Activated CD4-positive, alpha-beta memory T cell treated with anti-CD3 and anti-CD28 coated beads for 36 hours (primary cell): ENCODE measurements at regions of chr13 and their contacts with region 1.

Region 1: GRCh38 chr13:40026174-40026585 is 370.7 kb downstream of the COG6 start:
- DNase-seq: peak; percentile 82
- H3K4me3 Mint-ChIP-seq: peak overlapping the region; percentile 3
- H3K27ac Mint-ChIP-seq: peak overlapping the region; percentile 83
- H3K4me1 Mint-ChIP-seq: peaks cover 44% of the 10 kb centered on the region
- H3K27me3 Mint-ChIP-seq: peaks cover 5% of the 10 kb centered on the region

Region 2: DNA sequence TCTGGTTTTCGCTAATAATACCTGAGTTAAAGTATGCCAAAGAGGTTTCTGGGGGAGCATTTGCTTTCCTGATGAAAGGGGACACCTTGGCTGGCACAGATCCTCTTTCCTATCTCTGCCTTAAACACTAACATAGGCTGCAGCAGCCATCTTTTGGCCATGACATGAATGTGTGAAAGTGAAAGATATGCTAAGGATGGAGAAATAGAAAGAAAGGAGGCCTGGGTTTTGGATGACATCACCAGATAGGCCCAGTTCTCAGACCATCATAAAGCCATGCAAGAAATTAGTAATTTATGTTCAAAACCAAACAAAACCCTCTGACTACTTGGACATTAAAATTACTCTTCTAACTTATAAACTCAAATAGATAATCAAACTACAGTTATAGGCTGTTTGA is 91.0 kb before region 1 on chr13:
- CTCF ChIA-PET with region 1: interaction called, 4 read pairs
- POLR2A ChIA-PET with region 1: no interaction called
- intact Hi-C with region 1: loop called (anchors 2 kb)
- DNase-seq: no peak
- H3K4me3 Mint-ChIP-seq: no peak overlapping the region
- H3K27ac Mint-ChIP-seq: no peak overlapping the region
- H3K4me1 Mint-ChIP-seq: peaks cover 17% of the 10 kb centered on the region
- H3K27me3 Mint-ChIP-seq: no peaks in the 10 kb centered on the region

Region 3: DNA sequence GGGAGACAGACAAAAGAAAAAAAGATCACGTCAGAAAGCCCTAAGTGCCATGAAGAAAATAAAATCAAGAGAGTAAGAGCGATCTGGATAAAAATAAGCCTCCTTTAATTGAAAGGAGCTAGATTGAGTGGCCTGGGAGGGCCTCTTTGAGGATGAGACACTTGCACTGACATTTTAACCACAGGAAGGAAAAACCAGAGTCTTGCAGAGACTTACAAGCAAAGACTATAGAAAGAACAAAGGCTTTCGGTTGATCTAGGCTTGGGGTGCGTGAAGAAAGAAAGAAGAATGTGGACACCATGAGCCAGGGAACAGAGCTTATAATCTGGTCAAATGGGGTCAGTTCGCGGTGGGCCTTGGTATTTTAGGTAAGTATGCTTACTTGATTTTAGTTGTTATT is 28.0 kb before region 1 on chr13:
- CTCF ChIA-PET with region 1: no interaction called
- POLR2A ChIA-PET with region 1: no interaction called
- intact Hi-C with region 1: no loop called
- DNase-seq: peak; percentile 25
- H3K4me3 Mint-ChIP-seq: no peak overlapping the region
- H3K27ac Mint-ChIP-seq: no peak overlapping the region
- H3K4me1 Mint-ChIP-seq: peaks cover 19% of the 10 kb centered on the region
- H3K27me3 Mint-ChIP-seq: no peaks in the 10 kb centered on the region

Region 4: DNA sequence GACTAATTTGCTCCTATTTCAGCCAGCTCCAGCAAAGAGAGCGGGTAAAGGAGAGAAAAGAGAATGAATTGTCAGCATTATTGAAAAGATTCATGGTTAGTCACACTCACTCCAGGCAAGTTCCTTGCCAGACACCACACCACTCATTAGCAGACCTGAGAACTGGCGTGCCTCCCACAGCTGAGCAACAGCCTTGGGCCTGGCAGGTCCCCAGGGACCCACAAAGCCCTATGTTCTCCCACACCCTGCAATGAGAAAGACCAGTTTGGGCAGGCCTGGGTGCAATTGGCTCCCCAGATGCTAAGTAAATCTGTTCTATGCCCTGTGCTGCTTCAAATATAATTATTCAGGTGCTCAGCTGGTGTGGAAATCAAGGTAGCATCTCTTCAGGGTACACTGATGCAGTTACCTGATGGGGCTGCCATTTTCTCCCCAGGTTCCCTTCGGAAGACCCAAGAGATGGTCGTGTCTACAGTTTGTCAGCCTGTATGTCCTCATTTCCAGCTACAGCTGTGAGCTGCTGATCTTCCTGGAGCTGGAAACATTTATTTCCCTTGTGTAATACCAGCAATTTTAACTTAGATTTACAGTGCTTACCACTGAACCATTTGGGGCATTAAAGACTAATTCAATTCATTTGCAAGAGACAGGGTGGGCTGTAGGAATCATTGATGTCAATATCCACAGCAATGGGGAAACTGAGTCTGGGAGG is 34.3 kb after region 1 on chr13:
- CTCF ChIA-PET with region 1: interaction called, 4 read pairs
- POLR2A ChIA-PET with region 1: interaction called, 5 read pairs
- intact Hi-C with region 1: loop called (anchors 1 kb)
- DNase-seq: peak; percentile 83
- H3K4me3 Mint-ChIP-seq: peak overlapping the region; percentile 42
- H3K27ac Mint-ChIP-seq: peak overlapping the region; percentile 47
- H3K4me1 Mint-ChIP-seq: peaks cover 46% of the 10 kb centered on the region
- H3K27me3 Mint-ChIP-seq: no peaks in the 10 kb centered on the region

Region 5: DNA sequence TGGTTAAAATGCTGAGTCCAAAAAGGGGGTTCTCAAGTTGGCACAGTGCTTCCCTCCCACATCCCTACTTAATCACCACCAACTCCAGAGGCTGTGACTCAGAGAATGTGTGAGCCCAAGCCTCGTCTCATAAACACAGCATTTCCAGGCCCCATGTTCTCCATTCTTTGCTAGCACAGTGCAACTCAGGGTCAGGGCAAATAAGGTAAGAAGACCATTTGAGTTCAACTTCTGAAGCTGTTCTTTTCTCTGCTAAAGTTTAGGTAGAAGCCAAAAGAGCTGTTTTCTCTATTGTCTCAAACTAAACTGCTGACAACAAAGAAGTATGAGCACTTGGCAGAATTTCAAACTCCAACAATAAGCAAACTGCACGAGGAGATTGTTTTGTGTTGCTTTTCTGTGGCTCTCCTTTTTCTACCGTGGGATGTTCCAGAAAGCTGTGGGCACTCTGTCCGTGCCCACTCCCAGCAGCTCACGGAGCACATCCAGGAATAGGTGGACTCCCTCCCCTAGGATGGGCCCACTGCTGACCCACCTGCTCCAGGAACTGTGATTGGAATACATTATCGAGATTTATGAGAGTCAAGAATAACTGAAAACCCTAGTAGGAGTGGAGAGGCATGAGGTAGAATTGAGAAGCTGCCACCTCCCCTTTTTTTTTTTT is 123.6 kb after region 1 on chr13:
- CTCF ChIA-PET with region 1: no interaction called
- POLR2A ChIA-PET with region 1: no interaction called
- intact Hi-C with region 1: loop called (anchors 2 kb)
- DNase-seq: no peak
- H3K4me3 Mint-ChIP-seq: no peak overlapping the region
- H3K27ac Mint-ChIP-seq: peak overlapping the region; percentile 18
- H3K4me1 Mint-ChIP-seq: peaks cover 62% of the 10 kb centered on the region
- H3K27me3 Mint-ChIP-seq: no peaks in the 10 kb centered on the region

Region 6: GRCh38 chr13:40251343-40252032 is 225.3 kb after region 1 on chr13:
- CTCF ChIA-PET with region 1: no interaction called
- POLR2A ChIA-PET with region 1: no interaction called
- intact Hi-C with region 1: loop called (anchors 1 kb)
- DNase-seq: peak; percentile 13
- H3K4me3 Mint-ChIP-seq: no peak overlapping the region
- H3K27ac Mint-ChIP-seq: peak overlapping the region; percentile 70
- H3K4me1 Mint-ChIP-seq: peaks cover 42% of the 10 kb centered on the region
- H3K27me3 Mint-ChIP-seq: no peaks in the 10 kb centered on the region

Region 7: GRCh38 chr13:40764587-40765403 is 738.6 kb after region 1 on chr13:
- CTCF ChIA-PET with region 1: no interaction called
- POLR2A ChIA-PET with region 1: no interaction called
- intact Hi-C with region 1: loop called (anchors 1 kb)
- DNase-seq: peak; percentile 75
- H3K4me3 Mint-ChIP-seq: peak overlapping the region; percentile 23
- H3K27ac Mint-ChIP-seq: peak overlapping the region; percentile 85
- H3K4me1 Mint-ChIP-seq: peaks cover 47% of the 10 kb centered on the region
- H3K27me3 Mint-ChIP-seq: no peaks in the 10 kb centered on the region